Gastrocnemius medialis (tissue), 4 donors: ENCODE measurements at regions of chr1 and their contacts with region 1.

Region 1: GRCh38 chr1:46718727-46719622 is at the start of gene EFCAB14:
- DNase-seq: peak; percentile 89 to 96
- ATAC-seq: peak; percentile 96 to 97
- H3K4me3 ChIP-seq: peak within 1 kb of the TSS; percentile 89 to 97 (median 96)
- H3K27ac ChIP-seq: peak within 1 kb of the TSS; percentile 80 to 93 (median 89)
- H3K4me1 ChIP-seq: peaks cover 28 to 29% of the 10 kb centered on the region in 2 donors
- H3K27me3 ChIP-seq: no peaks in the 10 kb centered on the region
- CTCF ChIP-seq: no peak
- POLR2A ChIP-seq: peak; percentile 57 to 75
- total RNA-seq, gene EFCAB14: 59.5 to 70.2 (median 62.8) TPM

Region 2: GRCh38 chr1:46247436-46248121 is 471.4 kb before region 1 on chr1 and contains the start of gene RAD54L:
- in situ Hi-C with region 1: no loop called
- intact Hi-C with region 1: loop called (anchors 2 kb)
- DNase-seq: peak; percentile 98
- ATAC-seq: peak; percentile 97 to 99
- H3K4me3 ChIP-seq: peak within 1 kb of the TSS; percentile 66 to 80 (median 76)
- H3K27ac ChIP-seq: peak within 1 kb of the TSS; percentile 67 to 75 (median 72)
- H3K4me1 ChIP-seq: peaks cover 8 to 10% of the 10 kb centered on the region in 2 donors
- H3K27me3 ChIP-seq: no peaks in the 10 kb centered on the region
- CTCF ChIP-seq: no peak
- POLR2A ChIP-seq: no peak
- total RNA-seq, gene RAD54L: 1.1 TPM in 1 of 4 donors, not detected in the others

Region 3: DNA sequence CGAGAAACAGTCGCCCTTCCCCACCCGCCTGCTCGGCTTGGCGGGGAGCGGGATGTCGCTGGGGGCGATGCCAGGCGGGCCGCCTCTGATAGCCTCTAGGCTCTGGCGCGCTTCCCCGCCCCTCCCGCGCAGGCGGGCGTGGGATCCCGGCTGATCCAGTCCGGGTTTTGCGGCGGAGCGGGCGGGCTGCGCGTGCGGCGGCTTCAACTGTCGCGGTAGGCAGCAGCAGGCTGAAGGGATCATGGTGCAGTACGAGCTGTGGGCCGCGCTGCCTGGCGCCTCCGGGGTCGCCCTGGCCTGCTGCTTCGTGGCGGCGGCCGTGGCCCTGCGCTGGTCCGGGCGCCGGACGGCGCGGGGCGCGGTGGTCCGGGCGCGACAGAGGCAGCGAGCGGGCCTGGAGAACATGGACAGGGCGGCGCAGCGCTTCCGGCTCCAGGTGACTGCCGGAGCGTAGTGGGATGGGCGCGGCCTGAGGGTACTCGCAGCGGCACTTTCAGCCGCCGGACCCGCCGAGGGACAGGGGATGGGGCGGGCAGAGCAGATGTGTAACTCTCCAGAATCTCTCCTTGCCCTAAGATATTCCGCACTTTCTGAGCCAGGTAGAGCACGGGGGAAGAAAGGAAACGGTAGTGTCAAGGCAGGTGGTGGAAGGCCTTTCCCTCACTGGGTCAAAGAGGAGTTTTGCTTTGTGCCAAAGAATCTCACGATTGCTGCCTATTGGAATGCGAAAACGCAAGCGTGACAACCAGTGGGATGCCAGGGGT is 324.7 kb before region 1 on chr1 and contains the start of gene FAAH:
- in situ Hi-C with region 1: no loop called
- intact Hi-C with region 1: loop called (anchors 2 kb)
- DNase-seq: peak; percentile 33 to 65
- ATAC-seq: peak; percentile 89 to 92
- H3K4me3 ChIP-seq: peak within 1 kb of the TSS; percentile 62 to 83 (median 66)
- H3K27ac ChIP-seq: peak within 1 kb of the TSS; percentile 45 to 75 (median 72)
- H3K4me1 ChIP-seq: peaks cover 33 to 40% of the 10 kb centered on the region in 2 donors
- H3K27me3 ChIP-seq: no peaks in the 10 kb centered on the region
- CTCF ChIP-seq: peak in 2 of 5 experiments; percentile 13 to 31
- POLR2A ChIP-seq: peak in 1 of 2 donors; percentile 53
- total RNA-seq, gene FAAH: 5.2 to 15.6 (median 7.3) TPM

Region 4: GRCh38 chr1:46606255-46606965 is 112.6 kb before region 1 on chr1:
- in situ Hi-C with region 1: loop called in 1 of 4 experiments (anchors 10 kb)
- intact Hi-C with region 1: loop called (anchors 2 kb)
- DNase-seq: no peak
- ATAC-seq: no peak
- H3K4me3 ChIP-seq: no peak overlapping the region
- H3K27ac ChIP-seq: peak overlapping the region; percentile 66 to 98 (median 82)
- H3K4me1 ChIP-seq: peaks cover 47 to 56% of the 10 kb centered on the region in 2 donors
- H3K27me3 ChIP-seq: no peaks in the 10 kb centered on the region
- CTCF ChIP-seq: no peak
- POLR2A ChIP-seq: no peak

Region 5: DNA sequence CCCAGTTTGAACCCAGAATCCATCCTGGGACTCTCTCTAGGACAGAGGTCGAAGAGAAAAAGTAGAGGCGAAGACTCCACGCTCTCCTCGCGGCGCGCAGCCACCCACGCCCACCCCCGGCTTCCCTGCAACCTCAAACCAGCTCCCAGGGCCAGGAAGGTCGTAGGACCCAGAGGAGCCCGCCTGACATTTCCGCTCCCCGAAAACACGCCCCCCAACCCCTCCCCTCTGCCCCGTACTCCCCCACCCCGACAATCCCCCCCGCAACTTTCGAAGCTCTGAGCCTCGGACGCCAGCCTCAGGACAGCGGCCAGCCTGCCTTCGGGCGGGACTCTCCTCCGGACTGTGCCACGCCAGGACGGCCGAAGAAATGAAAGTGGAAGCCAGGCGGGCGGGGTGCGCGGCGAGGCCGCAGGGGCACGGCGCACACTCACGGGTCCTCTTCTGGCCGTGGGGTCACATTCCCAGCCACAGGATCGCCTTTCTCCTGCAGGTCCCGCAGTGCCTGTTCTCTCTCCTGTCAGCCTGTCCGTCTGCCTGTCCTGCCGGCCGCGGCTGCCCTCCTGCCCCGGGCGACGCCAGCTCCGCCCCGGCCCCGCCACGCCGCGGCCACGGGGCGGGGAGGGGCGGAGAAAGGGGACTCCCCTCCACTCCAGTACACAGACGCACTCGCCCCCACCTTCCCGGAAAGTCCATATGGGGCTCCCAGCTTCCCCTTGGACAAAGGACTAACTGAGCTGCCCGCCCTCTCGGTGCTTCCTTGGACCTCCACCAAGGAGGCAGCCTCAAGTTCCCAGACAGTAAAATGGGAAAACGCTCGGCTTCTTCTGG is 102.5 kb before region 1 on chr1 and contains the start of gene MOB3C:
- in situ Hi-C with region 1: loop called in 1 of 4 experiments (anchors 10 kb)
- intact Hi-C with region 1: loop called (anchors 2 kb)
- DNase-seq: peak; percentile 81 to 90
- ATAC-seq: peak; percentile 60 to 65
- H3K4me3 ChIP-seq: peak within 1 kb of the TSS; percentile 77 to 89 (median 82)
- H3K27ac ChIP-seq: peak within 1 kb of the TSS; percentile 95 to 98 (median 96)
- H3K4me1 ChIP-seq: peaks cover 47 to 52% of the 10 kb centered on the region in 2 donors
- H3K27me3 ChIP-seq: no peaks in the 10 kb centered on the region
- CTCF ChIP-seq: no peak
- POLR2A ChIP-seq: peak; percentile 89 to 96
- total RNA-seq, gene MOB3C: 11.3 to 26.5 (median 23.3) TPM

Region 6: DNA sequence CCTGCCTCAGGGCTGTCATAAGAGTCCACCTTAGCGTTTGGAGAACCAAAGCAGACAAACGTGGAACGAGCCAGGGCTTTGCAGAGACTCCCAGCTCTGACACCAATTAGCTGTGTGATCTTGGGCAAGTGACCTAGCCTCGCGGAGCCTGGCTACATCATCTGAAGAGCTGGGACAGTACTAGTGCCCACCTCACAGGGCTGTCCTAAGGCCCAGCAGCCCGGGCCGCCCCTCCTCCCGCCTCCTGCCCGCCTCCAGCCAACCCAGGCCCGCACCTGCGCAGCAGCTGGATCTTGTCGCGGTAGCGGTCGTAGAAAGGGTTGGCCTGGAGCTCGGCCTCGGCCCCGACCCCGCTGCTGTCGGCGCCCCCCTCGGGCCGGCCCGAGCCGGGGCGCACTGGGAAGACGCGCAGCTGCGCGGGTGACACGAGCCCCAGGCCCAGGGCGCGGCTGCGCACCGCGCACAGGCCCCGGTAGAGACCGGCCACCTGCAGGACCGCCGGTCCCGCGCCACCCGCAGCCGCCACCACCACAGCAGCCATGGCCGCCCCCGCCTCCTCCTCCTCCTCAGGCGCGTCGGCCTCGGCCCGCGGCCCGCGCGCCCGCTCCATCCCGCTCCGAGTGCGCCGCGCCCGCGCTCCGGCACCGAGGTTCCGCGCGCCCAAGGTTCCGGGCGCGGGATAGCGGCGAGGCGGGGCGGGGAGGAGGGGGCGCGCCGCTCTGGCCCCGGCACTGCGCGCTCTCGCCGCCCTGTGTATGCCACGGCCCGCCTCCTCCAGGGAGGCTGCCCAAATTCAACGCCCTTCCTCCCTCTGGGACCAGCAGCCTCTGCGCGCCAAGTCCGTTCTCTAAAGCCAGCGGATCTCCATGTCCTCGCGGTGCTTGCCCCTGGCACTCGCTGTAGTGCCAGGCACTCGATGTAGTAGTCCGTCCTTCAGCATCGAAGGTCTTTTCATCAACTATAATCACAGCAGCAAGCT is 50.9 kb before region 1 on chr1 and contains the start of gene ATPAF1:
- in situ Hi-C with region 1: no loop called
- intact Hi-C with region 1: loop called (anchors 1 kb)
- DNase-seq: peak; percentile 28 to 83
- ATAC-seq: peak; percentile 84 to 87
- H3K4me3 ChIP-seq: peak within 1 kb of the TSS; percentile 79 to 91 (median 90)
- H3K27ac ChIP-seq: peak within 1 kb of the TSS; percentile 72 to 91 (median 83)
- H3K4me1 ChIP-seq: peaks cover 21 to 22% of the 10 kb centered on the region in 2 donors
- H3K27me3 ChIP-seq: no peaks in the 10 kb centered on the region
- CTCF ChIP-seq: peak in 1 of 5 experiments; percentile 12
- POLR2A ChIP-seq: peak; percentile 24 to 52
- total RNA-seq, gene ATPAF1: 76.6 to 173 (median 135) TPM

Region 7: DNA sequence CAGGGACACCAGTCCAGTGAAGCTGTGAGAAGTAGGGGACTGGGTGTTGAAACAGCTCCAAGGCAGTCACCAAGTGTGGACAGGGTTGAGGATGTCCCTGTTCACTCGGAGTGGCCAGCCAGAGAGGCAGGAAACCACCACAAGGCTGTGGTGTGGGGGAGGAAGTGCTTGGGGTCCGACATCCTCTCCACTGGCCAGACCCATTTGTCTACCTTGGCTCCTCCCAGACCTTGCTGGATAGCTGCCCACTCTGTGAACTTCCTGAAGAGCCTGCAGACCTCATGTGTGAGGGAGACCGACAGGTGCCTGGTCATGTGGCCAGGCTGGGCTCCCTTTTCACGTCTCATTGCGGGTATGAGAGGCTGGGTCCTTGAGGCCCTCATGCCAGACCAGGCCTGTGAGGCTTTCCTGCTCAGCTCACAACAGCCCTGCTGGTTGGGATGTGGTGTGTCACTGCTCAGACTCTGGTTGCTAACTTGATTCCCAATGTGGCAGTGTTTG is 101.6 kb after region 1 on chr1:
- in situ Hi-C with region 1: no loop called
- intact Hi-C with region 1: no loop called
- DNase-seq: no peak
- ATAC-seq: peak in 1 of 2 donors; percentile 51
- H3K4me3 ChIP-seq: no peak overlapping the region
- H3K27ac ChIP-seq: peak overlapping the region; percentile 53 to 66 (median 61)
- H3K4me1 ChIP-seq: peaks cover 0 to 5% of the 10 kb centered on the region in 2 donors
- H3K27me3 ChIP-seq: no peaks in the 10 kb centered on the region
- CTCF ChIP-seq: no peak
- POLR2A ChIP-seq: no peak